Activated CD8-positive, alpha-beta T cell treated with anti-CD3 and anti-CD28 coated beads for 36 hours (primary cell): ENCODE measurements at regions of chr11 and their contacts with region 1.

Region 1: DNA sequence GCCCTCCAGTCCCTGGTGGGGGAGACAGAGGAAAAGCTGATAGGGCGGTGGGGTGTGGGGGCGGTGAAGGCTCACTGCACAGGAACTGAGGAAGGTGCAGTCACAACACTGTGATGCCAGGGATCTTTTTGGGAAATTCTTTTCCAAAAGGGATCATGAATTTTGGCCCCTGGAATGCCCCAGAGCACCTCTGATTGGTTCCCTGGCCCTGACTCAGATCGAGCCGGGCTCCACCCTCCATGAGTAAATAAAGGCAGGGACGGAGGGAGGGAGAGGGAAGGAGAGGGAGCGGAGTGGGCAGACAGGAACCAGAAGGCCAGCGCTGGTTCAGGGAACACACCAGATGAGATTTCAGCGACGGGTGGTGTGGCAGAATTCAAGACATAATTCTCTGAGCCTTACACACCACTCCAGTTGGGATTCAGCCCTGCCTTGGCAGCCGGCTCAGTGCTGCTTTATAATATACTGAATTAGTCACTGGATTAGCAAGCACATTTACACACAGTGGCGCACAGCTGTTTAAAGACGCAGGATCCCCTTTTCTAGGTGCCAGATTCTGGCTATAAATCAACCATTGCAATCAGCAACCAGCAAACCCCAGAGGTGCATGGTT is 80.3 kb downstream of the ETS1 start:
- DNase-seq: peak; percentile 77
- ATAC-seq: peak; percentile 32
- H3K4me3 Mint-ChIP-seq: peak overlapping the region; percentile 95
- H3K27ac Mint-ChIP-seq: peak overlapping the region; percentile 96
- H3K4me1 Mint-ChIP-seq: peaks cover 86% of the 10 kb centered on the region
- H3K27me3 Mint-ChIP-seq: no peaks in the 10 kb centered on the region
- CTCF ChIP-seq: no peak

Region 2: DNA sequence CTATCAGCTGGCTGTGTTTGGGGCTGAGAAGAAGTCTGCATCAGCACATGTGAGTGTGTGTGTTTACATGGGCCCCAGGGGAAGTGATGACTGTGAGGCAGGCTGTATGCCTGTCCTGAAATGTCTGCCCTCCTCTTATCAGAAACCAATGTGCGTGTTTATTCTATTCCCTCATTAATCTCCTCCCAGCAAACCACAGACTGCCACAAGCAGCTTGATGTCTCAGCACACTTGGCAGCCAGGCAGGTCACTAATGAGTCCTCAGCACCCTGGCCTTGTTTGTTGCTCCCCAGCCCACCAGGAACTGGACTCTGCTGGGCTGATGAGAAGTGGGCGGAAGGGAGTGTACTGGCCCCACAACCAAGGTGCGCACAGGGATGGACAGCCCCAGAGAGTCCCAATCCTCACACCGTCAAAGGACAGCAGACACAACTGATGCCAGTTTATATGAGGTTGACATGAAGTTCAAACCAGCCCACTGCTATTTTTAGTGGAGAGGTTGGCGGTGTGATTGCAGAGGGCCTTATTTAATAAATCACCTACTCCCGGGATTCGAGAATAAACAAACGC is 145.6 kb before region 1 on chr11:
- CTCF ChIA-PET with region 1: no interaction called
- POLR2A ChIA-PET with region 1: no interaction called
- intact Hi-C with region 1: no loop called
- DNase-seq: no peak
- ATAC-seq: no peak
- H3K4me3 Mint-ChIP-seq: no peak overlapping the region
- H3K27ac Mint-ChIP-seq: no peak overlapping the region
- H3K4me1 Mint-ChIP-seq: peaks cover 9% of the 10 kb centered on the region
- H3K27me3 Mint-ChIP-seq: no peaks in the 10 kb centered on the region
- CTCF ChIP-seq: no peak

Region 3: DNA sequence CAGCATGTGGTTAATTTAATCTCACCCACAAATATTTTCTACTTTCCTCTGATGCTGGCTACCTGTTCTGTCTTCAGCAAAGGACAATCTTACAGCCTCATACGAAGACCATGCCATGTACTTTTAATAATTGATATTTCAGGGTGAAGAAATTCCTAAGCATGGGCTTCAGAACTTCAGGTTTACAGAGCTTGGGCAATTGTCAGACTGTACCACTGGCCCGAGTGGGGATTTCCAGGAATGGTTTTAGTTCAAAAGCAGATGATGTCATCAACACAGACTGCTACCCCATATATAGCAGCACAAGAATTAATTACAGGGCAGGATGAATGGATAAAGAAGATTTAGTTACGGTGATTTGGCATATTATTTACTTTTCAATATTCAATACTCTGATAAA is 91.6 kb before region 1 on chr11:
- CTCF ChIA-PET with region 1: no interaction called
- POLR2A ChIA-PET with region 1: no interaction called
- intact Hi-C with region 1: no loop called
- DNase-seq: peak; percentile 18
- ATAC-seq: peak; percentile 29
- H3K4me3 Mint-ChIP-seq: no peak overlapping the region
- H3K27ac Mint-ChIP-seq: no peak overlapping the region
- H3K4me1 Mint-ChIP-seq: peaks cover 70% of the 10 kb centered on the region
- H3K27me3 Mint-ChIP-seq: no peaks in the 10 kb centered on the region
- CTCF ChIP-seq: no peak

Region 4: DNA sequence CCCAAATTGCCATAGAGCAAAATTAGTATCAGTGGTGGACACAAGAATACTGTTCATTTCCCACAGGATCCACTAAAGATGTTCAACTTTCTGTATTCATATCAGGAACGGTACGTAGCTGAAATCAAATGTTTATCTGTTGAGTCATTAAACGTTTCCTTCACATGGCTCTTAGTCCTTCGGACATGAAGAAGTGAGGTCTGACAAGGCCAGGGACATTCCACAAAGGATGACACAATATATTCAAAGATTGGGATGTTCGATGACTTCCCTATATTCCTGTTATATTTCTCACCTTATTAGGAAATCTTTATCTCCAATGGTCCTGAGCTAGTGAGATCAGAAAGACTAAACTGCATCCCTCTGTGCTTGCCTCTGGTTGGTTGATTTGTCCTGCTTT is 48.8 kb before region 1 on chr11:
- CTCF ChIA-PET with region 1: interaction called, 4 read pairs
- POLR2A ChIA-PET with region 1: interaction called, 1,082 read pairs
- intact Hi-C with region 1: no loop called
- DNase-seq: no peak
- ATAC-seq: no peak
- H3K4me3 Mint-ChIP-seq: no peak overlapping the region
- H3K27ac Mint-ChIP-seq: peak overlapping the region; percentile 22
- H3K4me1 Mint-ChIP-seq: peaks cover 76% of the 10 kb centered on the region
- H3K27me3 Mint-ChIP-seq: no peaks in the 10 kb centered on the region
- CTCF ChIP-seq: no peak

Region 5: GRCh38 chr11:128465946-128466705 is 41.0 kb before region 1 on chr11:
- CTCF ChIA-PET with region 1: interaction called, 11 read pairs
- POLR2A ChIA-PET with region 1: interaction called, 1,082 read pairs
- intact Hi-C with region 1: loop called (anchors 5 kb)
- DNase-seq: no peak
- ATAC-seq: no peak
- H3K4me3 Mint-ChIP-seq: peak overlapping the region; percentile 68
- H3K27ac Mint-ChIP-seq: peak overlapping the region; percentile 97
- H3K4me1 Mint-ChIP-seq: peaks cover 93% of the 10 kb centered on the region
- H3K27me3 Mint-ChIP-seq: no peaks in the 10 kb centered on the region
- CTCF ChIP-seq: no peak

Region 6: DNA sequence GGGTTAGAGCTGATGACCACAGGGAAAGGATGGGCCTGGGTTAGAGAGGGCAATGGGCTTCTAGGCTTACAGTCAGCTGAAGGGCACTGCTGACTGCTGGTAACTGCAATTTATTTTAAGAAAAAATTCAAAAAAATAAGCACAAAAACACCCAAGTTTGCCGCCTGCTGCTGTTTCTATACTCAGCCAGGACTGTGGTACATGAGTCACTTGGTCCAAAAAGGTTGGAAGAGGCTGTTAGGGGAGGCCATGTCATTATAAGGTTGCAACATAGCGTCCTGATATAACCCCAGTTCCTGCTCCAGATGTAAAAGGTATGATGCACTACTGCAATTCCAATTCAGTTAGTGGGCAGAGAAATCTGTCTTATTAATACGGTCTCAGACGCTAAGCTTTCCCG is 18.6 kb before region 1 on chr11:
- CTCF ChIA-PET with region 1: interaction called, 32 read pairs
- POLR2A ChIA-PET with region 1: interaction called, 1,082 read pairs
- intact Hi-C with region 1: no loop called
- DNase-seq: peak; percentile 69
- ATAC-seq: peak; percentile 63
- H3K4me3 Mint-ChIP-seq: peak overlapping the region; percentile 47
- H3K27ac Mint-ChIP-seq: peak overlapping the region; percentile 98
- H3K4me1 Mint-ChIP-seq: peaks cover 94% of the 10 kb centered on the region
- H3K27me3 Mint-ChIP-seq: no peaks in the 10 kb centered on the region
- CTCF ChIP-seq: no peak

Region 7: DNA sequence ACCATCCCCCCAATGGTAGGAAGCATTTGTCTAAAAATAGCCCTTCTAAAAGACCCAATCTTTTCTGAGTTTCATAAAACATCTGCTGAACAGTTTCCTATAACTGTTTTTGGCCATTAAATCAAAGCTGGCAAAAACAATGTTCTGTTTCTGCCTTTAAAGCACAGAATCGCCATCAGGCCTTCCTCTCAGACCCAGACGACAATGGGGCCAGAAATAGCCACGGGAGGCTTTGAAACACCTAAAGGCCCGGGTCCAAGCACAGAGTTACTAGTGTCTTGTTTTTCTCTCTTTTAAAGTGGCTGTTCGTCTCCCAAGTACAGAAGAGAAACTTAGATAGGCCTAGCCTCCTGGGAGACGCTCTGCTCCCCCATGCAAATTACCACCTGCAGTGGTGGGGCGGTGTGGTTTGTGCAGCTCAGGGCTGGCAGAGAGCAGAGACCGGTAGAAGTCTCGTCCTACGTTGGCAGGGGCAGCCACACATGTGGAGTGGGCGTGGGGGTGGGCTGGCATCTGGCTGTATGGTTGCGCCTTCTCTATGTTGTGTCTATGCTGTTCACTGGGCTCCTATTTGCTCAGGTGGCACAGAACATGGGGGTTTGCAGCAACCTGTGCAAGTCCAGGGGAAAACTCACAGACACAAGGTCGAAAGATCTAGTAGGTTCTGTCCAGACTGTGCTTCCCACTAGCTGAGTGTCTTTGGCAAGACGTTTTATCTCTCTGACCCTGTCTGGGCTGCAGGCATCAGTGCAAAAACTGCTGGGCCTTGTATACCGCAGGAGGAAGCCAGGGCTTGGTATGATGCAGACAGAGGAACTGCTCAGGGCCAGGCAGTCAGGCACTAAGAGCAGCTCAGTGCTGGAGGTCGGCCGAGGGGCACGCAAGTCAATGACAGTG is 103.9 kb after region 1 on chr11:
- CTCF ChIA-PET with region 1: no interaction called
- POLR2A ChIA-PET with region 1: no interaction called
- intact Hi-C with region 1: no loop called
- DNase-seq: peak; percentile 75
- ATAC-seq: peak; percentile 83
- H3K4me3 Mint-ChIP-seq: peak overlapping the region; percentile 67
- H3K27ac Mint-ChIP-seq: peak overlapping the region; percentile 92
- H3K4me1 Mint-ChIP-seq: peaks cover 59% of the 10 kb centered on the region
- H3K27me3 Mint-ChIP-seq: no peaks in the 10 kb centered on the region
- CTCF ChIP-seq: no peak

Region 8: DNA sequence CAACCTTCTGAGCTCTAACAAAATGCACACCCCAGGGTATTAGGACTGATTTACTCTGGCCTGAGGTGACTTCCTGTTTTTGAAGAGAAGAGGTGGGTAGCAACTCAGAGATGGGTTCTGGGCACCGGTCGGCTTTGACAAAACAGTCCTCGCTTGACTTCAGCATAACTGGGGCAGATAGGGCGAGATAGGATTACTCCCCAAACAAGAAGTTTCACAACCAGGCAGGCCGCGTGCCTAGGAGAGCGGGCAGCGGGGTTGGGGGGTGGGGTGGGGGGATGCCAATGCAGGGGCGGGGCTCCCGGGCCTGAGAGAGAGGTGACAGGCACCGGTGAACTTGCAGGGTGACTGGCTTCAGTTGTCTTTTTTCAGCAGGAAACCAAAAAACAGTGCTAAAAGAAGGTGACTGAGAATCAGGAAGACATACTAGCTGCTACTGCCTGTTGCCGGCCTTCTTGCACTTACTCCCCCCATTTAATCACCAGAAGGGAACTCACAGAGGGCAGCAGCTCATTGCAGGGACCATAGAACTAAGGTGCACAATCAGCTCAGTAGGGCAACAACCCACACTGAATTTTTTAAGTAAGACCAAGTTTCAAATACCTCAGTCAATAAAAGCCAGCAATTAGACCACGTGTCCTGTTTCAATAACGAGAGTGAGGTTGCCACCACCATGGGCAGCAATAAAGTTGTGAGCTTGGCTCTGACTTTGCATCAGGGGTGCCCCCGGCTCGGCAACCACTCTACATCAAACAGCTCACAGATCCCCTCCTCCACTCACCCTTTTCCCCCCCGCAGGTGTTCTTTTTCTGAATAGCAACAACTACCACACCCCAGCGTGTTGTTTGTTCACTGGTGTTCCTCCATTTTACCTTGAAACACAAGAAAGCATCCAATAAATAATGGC is 117.4 kb after region 1 on chr11:
- CTCF ChIA-PET with region 1: interaction called, 400 read pairs
- POLR2A ChIA-PET with region 1: interaction called, 34 read pairs
- intact Hi-C with region 1: no loop called
- DNase-seq: peak; percentile 77
- ATAC-seq: peak; percentile 57
- H3K4me3 Mint-ChIP-seq: peak overlapping the region; percentile 56
- H3K27ac Mint-ChIP-seq: peak overlapping the region; percentile 94
- H3K4me1 Mint-ChIP-seq: peaks cover 97% of the 10 kb centered on the region
- H3K27me3 Mint-ChIP-seq: no peaks in the 10 kb centered on the region
- CTCF ChIP-seq: no peak